Posterior vena cava (tissue), 2 donors: ENCODE measurements at regions of chr20 and their contacts with region 1.

Region 1: GRCh38 chr20:61073376-61073775 is 178.7 kb upstream of the CDH4 start:
- DNase-seq: no peak

Region 2: DNA sequence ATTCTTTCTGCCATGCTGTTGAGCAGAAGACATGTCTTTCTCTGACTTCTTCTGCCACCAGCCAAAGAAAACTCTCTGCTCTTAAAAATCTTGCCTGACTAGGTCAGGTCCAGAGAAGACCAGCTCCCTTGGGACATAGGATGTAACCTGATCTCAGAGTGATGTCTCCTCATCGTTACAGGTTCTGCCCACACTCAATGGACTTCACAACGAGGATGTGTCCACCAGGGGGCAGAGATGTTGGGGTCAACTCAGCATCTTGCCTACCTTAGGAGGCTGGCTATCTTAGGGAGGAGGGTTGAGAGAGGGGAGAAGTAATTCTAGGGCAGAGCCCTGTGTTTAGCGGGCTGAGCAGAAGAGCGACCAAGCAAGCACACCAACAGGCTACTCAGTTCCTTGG is 28.9 kb before region 1 on chr20:
- intact Hi-C with region 1: loop called in 1 of 2 experiments (anchors 1 kb)
- DNase-seq: peak; percentile 26